HEK293 (cell line): ENCODE measurements at regions of chr14 and their contacts with region 1.

Region 1: DNA sequence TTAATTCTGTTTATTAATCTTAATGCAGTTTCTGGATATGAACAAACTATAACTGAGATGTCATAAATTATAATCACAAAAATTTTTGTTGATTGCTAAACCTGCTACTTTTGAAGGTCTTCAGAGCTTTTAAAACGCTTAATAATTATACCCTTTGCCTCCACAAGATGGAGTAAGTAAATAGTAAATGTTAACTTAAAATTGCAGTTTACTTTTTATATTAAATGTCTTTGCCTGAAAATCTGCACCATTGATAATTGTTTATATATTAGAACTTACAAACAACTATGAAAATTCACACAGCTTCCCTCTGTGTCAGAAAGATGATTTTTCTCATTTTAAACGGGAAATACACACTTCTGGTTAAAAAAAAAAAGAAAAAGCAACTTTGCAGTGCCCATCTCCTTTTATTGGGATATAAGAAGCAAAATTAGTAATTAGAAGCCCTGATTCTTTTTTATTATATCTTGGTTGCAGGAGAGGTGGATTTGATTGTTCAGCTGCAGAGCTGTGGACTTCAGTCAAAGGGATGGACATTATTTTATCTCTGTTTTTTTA is 35.6 kb downstream of the SCFD1 start:
- H3K4me3 ChIP-seq: no peak overlapping the region
- H3K27ac ChIP-seq: no peak overlapping the region
- H3K4me1 ChIP-seq: no peaks in the 10 kb centered on the region
- CTCF ChIP-seq: no peak

Region 2: GRCh38 chr14:30456296-30456695 is 201.4 kb before region 1 on chr14:
- CTCF ChIA-PET with region 1: no interaction called
- POLR2A ChIA-PET with region 1: no interaction called
- H3K4me3 ChIP-seq: no peak overlapping the region
- H3K27ac ChIP-seq: no peak overlapping the region
- H3K4me1 ChIP-seq: no peaks in the 10 kb centered on the region
- CTCF ChIP-seq: no peak

Region 3: GRCh38 chr14:30808576-30808975 is 150.9 kb after region 1 on chr14:
- CTCF ChIA-PET with region 1: interaction called, 12 read pairs
- POLR2A ChIA-PET with region 1: no interaction called
- H3K4me3 ChIP-seq: no peak overlapping the region
- H3K27ac ChIP-seq: no peak overlapping the region
- H3K4me1 ChIP-seq: no peaks in the 10 kb centered on the region
- CTCF ChIP-seq: no peak